ENCODE measurements at regions of chr16 and their contacts with region 1.

Region 1: DNA sequence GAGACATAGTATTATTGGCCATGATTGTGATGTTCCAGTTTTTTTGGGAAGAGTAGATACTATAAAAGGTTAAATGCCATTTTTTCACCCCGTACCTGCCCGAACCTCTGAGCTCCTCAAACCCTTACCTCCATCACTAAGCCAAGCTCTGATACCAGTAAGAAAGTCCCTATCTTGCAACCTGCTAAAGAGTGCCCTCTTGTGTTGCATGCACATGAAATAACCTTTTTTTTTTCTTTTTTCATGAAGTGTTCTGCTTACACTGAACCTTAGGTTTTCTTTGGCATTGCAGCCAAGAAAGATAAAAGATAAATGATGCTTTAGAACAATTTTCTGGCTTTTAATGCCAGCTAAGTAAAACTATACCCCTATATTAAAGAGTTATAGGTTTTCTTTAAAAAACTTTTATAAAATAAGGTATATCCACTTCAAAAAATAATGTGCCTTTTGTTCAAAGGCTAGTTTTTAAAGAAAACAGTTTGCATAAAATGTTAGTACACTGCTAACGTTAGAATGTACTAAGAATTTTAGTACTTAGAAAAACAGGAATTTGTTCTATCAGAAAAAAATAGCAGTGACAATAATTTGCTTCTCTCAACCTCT is 295.3 kb upstream of the PMFBP1 start:
- DNase-seq: peak; percentile 28
- ATAC-seq: peak; percentile 78
- H3K4me3 ChIP-seq: no peak overlapping the region
- H3K27ac ChIP-seq: no peak overlapping the region
- H3K4me1 ChIP-seq: no peaks in the 10 kb centered on the region
- H3K27me3 ChIP-seq: no peaks in the 10 kb centered on the region
- CTCF ChIP-seq: peak; percentile 58 to 74 (median 72)
- POLR2A ChIP-seq: no peak
- RAD21 ChIP-seq: peak; percentile 74

Region 2: GRCh38 chr16:72241930-72242329 is 225.3 kb before region 1 on chr16:
- CTCF ChIA-PET with region 1: interaction called, 29 read pairs
- POLR2A ChIA-PET with region 1: no interaction called
- RAD21 ChIA-PET with region 1: interaction called, 3 read pairs
- intact Hi-C with region 1: loop called (anchors 1 kb)
- DNase-seq: peak; percentile 39
- ATAC-seq: peak; percentile 99
- H3K4me3 ChIP-seq: no peak overlapping the region
- H3K27ac ChIP-seq: no peak overlapping the region
- H3K4me1 ChIP-seq: peaks cover 0 to 2% of the 10 kb centered on the region in 2 experiments; a peak in 1 of 4 replicates
- H3K27me3 ChIP-seq: no peaks in the 10 kb centered on the region
- CTCF ChIP-seq: peak; percentile 54 to 83 (median 75); a peak in 5 of 6 replicates
- POLR2A ChIP-seq: no peak
- RAD21 ChIP-seq: peak; percentile 88

Measured in HCT116 (cell line).